ENCODE measurements at regions of chr20 and their contacts with region 1.

Region 1: GRCh38 chr20:49541733-49542513 is 26.0 kb downstream of the PTGIS start:
- DNase-seq: no peak
- H3K4me3 ChIP-seq: no peak overlapping the region
- CTCF ChIP-seq: peak; percentile 69

Region 2: DNA sequence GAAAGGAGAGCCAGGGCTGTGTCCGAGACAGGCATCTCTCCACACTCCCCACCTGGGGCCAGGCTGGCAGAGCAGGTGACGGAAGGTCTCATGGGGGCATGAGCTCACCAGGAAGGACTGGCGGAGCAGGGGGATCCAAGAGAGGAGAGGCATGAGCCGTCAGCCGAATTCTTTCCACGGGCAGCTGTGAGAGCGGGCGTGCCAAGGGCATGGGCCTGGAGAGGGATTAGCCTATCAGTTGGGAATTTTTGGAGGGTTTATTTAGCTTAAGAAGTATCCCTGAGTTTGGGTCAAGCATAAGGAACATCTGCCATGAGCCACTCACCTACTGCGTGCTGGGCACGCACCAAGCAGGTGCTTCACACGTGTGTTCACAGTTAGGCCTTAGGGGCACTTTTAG is 203.9 kb before region 1 on chr20:
- CTCF ChIA-PET with region 1: interaction called, 130 read pairs
- POLR2A ChIA-PET with region 1: no interaction called
- DNase-seq: no peak
- H3K4me3 ChIP-seq: no peak overlapping the region
- CTCF ChIP-seq: no peak

Region 3: GRCh38 chr20:49559401-49560081 is 17.6 kb after region 1 on chr20:
- CTCF ChIA-PET with region 1: interaction called, 100 read pairs
- POLR2A ChIA-PET with region 1: no interaction called
- DNase-seq: no peak
- H3K4me3 ChIP-seq: no peak overlapping the region
- CTCF ChIP-seq: no peak

Region 4: DNA sequence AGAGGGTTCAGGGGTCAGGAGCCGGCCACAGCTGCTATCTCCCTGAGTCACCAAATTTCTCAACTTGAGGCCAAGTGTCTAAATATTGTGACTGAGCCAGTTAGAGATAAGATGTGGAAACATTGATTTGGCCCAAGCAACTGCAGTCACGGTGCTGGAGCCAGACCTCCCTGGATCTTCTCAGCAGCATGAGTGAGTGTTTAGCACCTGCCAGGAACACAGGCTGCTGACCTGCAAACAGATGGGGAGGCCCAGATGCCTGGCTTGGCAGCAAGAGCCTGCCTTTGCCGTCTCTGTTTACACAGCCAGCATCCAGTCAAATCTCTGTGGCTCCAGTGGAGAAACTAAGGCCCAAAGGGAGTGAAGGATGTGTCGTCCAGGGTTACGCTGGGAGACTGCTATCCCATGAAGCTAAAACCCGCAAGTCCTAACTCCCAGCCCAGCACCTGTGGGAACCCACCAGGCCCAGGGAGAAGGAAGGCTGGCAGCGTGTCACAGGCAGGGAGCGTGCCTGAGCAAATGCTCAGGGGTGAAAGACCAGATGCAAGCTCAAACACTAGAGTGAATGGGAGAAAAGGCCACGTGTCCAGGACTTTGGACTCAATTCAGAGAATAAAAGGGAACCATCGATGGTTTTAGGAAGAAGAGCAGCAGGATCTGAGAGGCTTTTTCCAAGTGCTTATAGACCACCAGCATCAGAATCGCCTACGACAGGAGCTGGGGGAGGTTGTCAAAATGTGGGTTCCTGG is 41.9 kb after region 1 on chr20:
- CTCF ChIA-PET with region 1: interaction called, 10 read pairs
- POLR2A ChIA-PET with region 1: no interaction called
- DNase-seq: no peak
- H3K4me3 ChIP-seq: no peak overlapping the region
- CTCF ChIP-seq: no peak

Region 5: GRCh38 chr20:49853640-49854039 is 311.7 kb after region 1 on chr20:
- CTCF ChIA-PET with region 1: interaction called, 28 read pairs
- POLR2A ChIA-PET with region 1: no interaction called
- DNase-seq: no peak
- H3K4me3 ChIP-seq: no peak overlapping the region
- CTCF ChIP-seq: no peak

Region 6: GRCh38 chr20:49893242-49894072 is 351.5 kb after region 1 on chr20:
- CTCF ChIA-PET with region 1: interaction called, 15 read pairs
- POLR2A ChIA-PET with region 1: no interaction called
- DNase-seq: no peak
- H3K4me3 ChIP-seq: no peak overlapping the region
- CTCF ChIP-seq: no peak

Measured in AG04449 (cell line).